ENCODE measurements at regions of chr6 and their contacts with region 1.

Region 1: DNA sequence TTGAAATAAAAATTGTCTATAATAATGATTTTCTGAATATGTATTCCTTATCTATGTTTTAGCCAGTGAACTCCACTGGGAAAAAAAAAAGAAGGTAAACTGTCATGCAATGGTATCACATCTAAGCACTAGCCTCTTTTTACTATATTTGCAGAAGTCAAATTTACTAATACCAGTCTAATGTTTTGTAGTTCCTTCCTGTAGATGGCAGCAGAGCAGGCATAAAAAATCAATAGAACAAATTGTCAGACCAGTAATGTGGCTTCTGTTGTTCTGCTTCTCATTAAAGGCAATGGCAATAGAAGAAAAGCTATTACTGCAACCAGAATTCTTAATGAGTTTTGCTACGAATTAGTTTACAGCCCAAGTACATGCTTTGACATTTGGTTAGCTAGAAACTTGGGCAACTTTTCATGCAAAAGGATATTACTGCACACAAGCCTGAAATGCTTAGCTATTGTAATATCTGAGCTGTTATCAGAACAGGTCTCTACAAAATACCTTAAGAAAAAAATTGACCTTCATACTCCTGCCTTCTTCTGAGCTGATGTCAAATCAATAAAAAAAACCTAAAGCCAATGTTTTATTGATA is 476.9 kb downstream of the KHDRBS2 start:
- DNase-seq: no peak

Region 2: GRCh38 chr6:62146954-62147853 is 338.1 kb after region 1 on chr6:
- intact Hi-C with region 1: loop called (anchors 1 kb)
- DNase-seq: no peak

Region 3: GRCh38 chr6:62891065-62891647 is 1082.1 kb after region 1 on chr6:
- intact Hi-C with region 1: loop called (anchors 10 kb)
- DNase-seq: no peak

Measured in posterior cingulate gyrus (tissue), 11 donors.